AG04450 (cell line): ENCODE measurements at regions of chr5 and their contacts with region 1.

Region 1: DNA sequence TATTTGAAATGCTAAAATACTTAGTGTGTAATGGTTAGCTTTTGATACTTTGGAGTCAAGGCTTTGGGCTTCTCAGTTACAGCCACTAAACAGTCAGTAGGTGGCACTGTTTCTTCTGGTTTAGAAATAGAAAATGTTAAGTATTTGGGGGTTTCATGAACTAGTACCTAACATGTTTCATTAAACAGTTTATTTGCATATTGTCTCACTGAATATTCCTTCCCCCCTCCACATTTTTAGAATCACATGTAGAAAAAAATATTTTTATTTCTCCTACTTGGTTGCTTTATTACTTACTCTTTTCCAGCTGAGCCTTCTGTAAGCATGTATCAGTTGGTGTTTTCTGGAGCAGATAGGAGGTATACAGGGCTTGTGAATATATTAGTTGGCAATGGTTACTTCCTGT is 48.0 kb downstream of the IPO11 start:
- DNase-seq: no peak
- H3K4me3 ChIP-seq: no peak overlapping the region
- H3K27ac ChIP-seq: no peak overlapping the region
- H3K27me3 ChIP-seq: no peaks in the 10 kb centered on the region
- CTCF ChIP-seq: peak; percentile 90

Region 2: DNA sequence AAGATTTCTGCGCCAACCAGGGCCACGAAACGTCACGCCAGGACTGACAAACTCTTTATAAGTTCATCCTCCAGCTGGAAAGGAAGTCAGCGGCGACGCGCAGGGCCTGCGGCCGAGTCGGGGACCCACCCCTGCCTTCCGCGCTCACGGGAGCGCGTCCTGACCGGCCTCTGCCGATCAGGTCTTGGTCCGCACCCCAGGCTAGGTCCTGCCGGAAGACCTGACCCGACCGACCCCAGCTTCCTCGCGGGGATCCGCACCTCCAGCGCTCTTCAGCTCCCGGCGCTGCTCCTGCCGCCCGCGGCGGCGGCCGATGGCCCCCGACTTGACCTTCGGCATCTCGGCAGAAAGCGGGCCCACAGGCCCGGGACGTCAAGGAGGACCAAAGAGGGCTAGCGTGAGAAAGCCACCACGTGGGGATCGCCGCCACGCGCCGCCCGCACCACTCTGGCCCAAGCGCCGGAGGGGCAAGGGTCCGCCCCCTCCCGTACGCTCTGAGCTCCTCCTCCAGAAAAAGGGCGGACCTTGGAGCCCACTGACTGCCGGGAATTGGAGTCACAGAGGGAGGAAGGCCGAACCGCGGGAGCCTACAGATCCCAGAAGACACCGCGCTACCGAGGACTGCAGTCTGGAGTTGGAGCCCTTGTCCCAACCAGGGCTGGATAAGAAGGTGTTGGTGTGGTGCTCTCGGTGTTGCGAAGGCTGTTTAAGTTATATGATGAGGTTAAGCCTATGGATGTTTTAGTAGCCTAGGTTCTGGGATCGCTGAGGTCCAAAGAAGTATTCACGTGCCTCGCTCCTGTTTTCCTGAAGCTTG is 56.9 kb before region 1 on chr5 and contains the start of gene DIMT1:
- CTCF ChIA-PET with region 1: interaction called, 12 read pairs
- POLR2A ChIA-PET with region 1: no interaction called
- DNase-seq: peak; percentile 93
- H3K4me3 ChIP-seq: peak within 1 kb of the TSS; percentile 87
- H3K27ac ChIP-seq: peak within 1 kb of the TSS; percentile 95
- H3K27me3 ChIP-seq: no peaks in the 10 kb centered on the region
- CTCF ChIP-seq: no peak
- polyA plus RNA-seq, gene DIMT1: 21.1 and 31.1 TPM in 2 replicates

Region 3: GRCh38 chr5:62450259-62450658 is 10.3 kb before region 1 on chr5:
- CTCF ChIA-PET with region 1: interaction called, 25 read pairs
- POLR2A ChIA-PET with region 1: interaction called, 3 read pairs
- DNase-seq: no peak
- H3K4me3 ChIP-seq: no peak overlapping the region
- H3K27ac ChIP-seq: no peak overlapping the region
- H3K27me3 ChIP-seq: no peaks in the 10 kb centered on the region
- CTCF ChIP-seq: no peak

Region 4: DNA sequence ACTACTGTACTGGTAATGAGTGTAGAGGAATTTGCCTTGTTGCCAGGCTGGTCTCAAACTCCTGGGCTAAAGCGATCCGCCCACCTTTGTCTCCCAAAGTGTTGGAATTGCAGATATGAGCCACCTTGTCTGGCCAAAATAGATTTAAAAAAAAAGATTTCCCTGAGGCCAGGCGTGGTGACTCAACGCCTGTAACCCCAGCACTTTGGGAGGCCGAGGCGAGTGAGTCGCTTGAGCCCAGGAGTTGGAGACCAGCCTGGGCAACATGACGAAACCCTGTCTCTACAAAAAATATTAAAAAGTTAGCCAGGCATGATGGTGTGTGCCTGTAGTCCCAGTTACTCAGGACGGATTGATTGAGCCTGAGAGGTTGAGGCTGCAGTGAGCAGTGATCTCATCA is 14.5 kb after region 1 on chr5:
- CTCF ChIA-PET with region 1: interaction called, 22 read pairs
- POLR2A ChIA-PET with region 1: no interaction called
- DNase-seq: no peak
- H3K4me3 ChIP-seq: no peak overlapping the region
- H3K27ac ChIP-seq: peak overlapping the region; percentile 23
- H3K27me3 ChIP-seq: no peaks in the 10 kb centered on the region
- CTCF ChIP-seq: no peak

Region 5: GRCh38 chr5:62483556-62483955 is 23.0 kb after region 1 on chr5:
- CTCF ChIA-PET with region 1: interaction called, 10 read pairs
- POLR2A ChIA-PET with region 1: no interaction called
- DNase-seq: no peak
- H3K4me3 ChIP-seq: no peak overlapping the region
- H3K27ac ChIP-seq: no peak overlapping the region
- H3K27me3 ChIP-seq: no peaks in the 10 kb centered on the region
- CTCF ChIP-seq: no peak

Region 6: DNA sequence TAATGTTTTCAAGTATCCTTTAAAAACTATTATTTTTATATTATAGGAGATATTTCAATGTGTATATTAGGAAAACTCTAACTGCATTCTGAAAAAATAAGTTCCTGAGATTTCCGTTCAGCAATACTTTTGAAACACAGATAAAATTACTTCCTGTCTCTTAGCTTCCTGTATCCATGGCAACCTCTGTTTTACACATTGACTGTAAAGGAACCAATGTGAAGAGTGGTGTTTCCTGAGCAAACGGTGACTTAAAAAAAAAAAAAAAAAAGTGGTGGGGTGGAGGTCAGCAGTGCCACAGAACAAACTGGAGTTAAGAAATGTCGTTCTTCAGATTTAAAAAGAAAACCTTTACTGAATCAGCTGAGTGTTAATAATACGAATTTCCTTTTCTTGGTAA is 118.0 kb after region 1 on chr5 and contains the start of gene LRRC70:
- CTCF ChIA-PET with region 1: no interaction called
- POLR2A ChIA-PET with region 1: no interaction called
- DNase-seq: no peak
- H3K4me3 ChIP-seq: no peak within 1 kb of the TSS
- H3K27ac ChIP-seq: no peak within 1 kb of the TSS
- H3K27me3 ChIP-seq: no peaks in the 10 kb centered on the region
- CTCF ChIP-seq: no peak
- polyA plus RNA-seq, gene LRRC70: 0.19 and 0.71 TPM in 2 replicates

Region 7: GRCh38 chr5:62779010-62779422 is 318.4 kb after region 1 on chr5:
- CTCF ChIA-PET with region 1: interaction called, 78 read pairs
- POLR2A ChIA-PET with region 1: no interaction called
- DNase-seq: peak; percentile 21
- H3K4me3 ChIP-seq: no peak overlapping the region
- H3K27ac ChIP-seq: no peak overlapping the region
- H3K27me3 ChIP-seq: no peaks in the 10 kb centered on the region
- CTCF ChIP-seq: peak; percentile 74

Region 8: DNA sequence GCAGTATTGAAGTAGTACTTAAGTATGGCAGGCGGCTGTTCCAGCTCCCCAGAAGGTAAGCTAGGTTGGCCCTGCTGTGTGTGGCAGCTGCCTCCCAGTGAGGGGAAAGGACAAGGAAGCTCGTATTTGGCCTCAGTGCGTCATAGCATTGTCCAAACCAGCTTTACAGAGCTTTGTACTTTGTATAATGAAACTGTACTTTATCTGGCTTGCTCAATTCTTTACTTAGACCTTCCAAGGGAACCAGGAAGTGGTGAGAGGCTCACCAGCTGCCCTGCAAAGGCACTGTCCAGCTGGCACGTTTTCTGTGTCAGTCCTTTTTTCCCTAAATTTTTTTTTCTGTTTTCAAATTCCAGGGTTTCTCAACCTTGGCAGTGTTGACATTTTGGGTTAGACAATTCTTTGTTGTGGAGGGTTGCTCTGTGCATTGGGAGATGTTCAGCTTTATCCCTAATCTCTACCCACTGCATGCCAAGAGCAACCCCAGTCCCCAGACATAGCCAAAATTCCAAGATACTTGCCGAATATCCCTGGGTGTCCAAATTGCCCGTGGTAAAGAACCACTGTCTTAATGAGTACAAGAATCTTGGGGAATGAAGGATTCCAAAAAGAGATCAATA is 592.5 kb after region 1 on chr5:
- CTCF ChIA-PET with region 1: no interaction called
- POLR2A ChIA-PET with region 1: no interaction called
- DNase-seq: no peak
- H3K4me3 ChIP-seq: no peak overlapping the region
- H3K27ac ChIP-seq: no peak overlapping the region
- H3K27me3 ChIP-seq: no peaks in the 10 kb centered on the region
- CTCF ChIP-seq: no peak